AG04450 (cell line): ENCODE measurements at regions of chr14 and their contacts with region 1.

Region 1: GRCh38 chr14:76647697-76648298 is 113.5 kb upstream of the VASH1 start:
- DNase-seq: peak; percentile 23
- H3K4me3 ChIP-seq: no peak overlapping the region
- H3K27ac ChIP-seq: no peak overlapping the region
- H3K27me3 ChIP-seq: peaks cover 5% of the 10 kb centered on the region
- CTCF ChIP-seq: peak; percentile 87

Region 2: GRCh38 chr14:76514613-76515012 is 133.2 kb before region 1 on chr14:
- CTCF ChIA-PET with region 1: interaction called, 11 read pairs
- POLR2A ChIA-PET with region 1: no interaction called
- DNase-seq: no peak
- H3K4me3 ChIP-seq: no peak overlapping the region
- H3K27ac ChIP-seq: no peak overlapping the region
- H3K27me3 ChIP-seq: peaks cover 3% of the 10 kb centered on the region
- CTCF ChIP-seq: peak; percentile 32; the same call in 1 of the 2 replicates

Region 3: DNA sequence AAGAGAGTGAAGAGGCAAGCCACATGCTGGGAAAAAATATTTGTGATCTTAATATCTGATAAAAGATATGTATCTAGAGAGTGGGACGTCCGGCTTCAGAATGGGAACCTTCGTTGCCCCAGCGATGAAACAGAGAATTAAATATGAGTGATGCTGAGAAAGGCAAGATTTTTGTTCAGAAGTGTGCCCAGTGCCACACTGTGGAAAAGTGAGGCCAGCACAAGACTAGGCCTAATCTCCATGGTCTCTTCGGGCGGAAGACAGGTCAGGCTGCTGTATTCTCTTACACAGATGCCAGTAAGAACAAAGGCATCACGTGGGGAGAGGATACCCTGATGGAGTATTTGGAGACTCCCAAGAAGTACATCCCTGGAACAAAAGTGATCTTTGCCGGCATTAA is 14.2 kb before region 1 on chr14:
- CTCF ChIA-PET with region 1: no interaction called
- POLR2A ChIA-PET with region 1: no interaction called
- DNase-seq: no peak
- H3K4me3 ChIP-seq: no peak overlapping the region
- H3K27ac ChIP-seq: no peak overlapping the region
- H3K27me3 ChIP-seq: peaks cover 3% of the 10 kb centered on the region
- CTCF ChIP-seq: no peak